ENCODE measurements at regions of chr7 and their contacts with region 1.

Region 1: GRCh38 chr7:107462740-107463444 is 7.0 kb upstream of the GPR22 start:
- DNase-seq: peak; percentile 58
- H3K4me3 ChIP-seq: no peak overlapping the region
- H3K27ac ChIP-seq: no peak overlapping the region
- H3K4me1 ChIP-seq: no peaks in the 10 kb centered on the region
- H3K27me3 ChIP-seq: no peaks in the 10 kb centered on the region
- CTCF ChIP-seq: peak; percentile 38 to 88 (median 72)
- POLR2A ChIP-seq: no peak

Region 2: GRCh38 chr7:107201795-107202450 is 261.0 kb before region 1 on chr7:
- intact Hi-C with region 1: loop called (anchors 10 kb)
- DNase-seq: peak; percentile 37
- H3K4me3 ChIP-seq: no peak overlapping the region
- H3K27ac ChIP-seq: no peak overlapping the region
- H3K4me1 ChIP-seq: no peaks in the 10 kb centered on the region
- H3K27me3 ChIP-seq: no peaks in the 10 kb centered on the region
- CTCF ChIP-seq: peak in 3 of 4 experiments; percentile 25 to 67 (median 52)
- POLR2A ChIP-seq: no peak

Region 3: DNA sequence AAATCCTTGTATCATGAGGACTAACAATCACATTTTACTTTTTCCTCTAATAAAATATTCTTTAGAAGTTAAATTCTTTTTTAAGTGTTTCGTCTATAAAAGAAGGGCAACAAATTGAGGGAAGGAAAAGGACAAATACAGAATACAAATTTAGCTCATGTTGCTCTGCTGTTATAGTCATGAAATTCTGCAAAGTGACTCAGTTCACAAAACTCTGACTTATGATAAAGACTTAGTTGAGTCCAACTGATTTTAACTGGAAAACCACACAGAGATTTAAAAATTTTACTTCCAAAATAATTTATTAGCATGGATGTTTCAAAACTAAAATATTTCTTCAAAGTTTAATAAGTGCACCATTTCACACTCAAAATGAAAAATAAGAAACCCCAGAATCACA is 68.1 kb before region 1 on chr7:
- intact Hi-C with region 1: no loop called
- DNase-seq: no peak
- H3K4me3 ChIP-seq: no peak overlapping the region
- H3K27ac ChIP-seq: no peak overlapping the region
- H3K4me1 ChIP-seq: no peaks in the 10 kb centered on the region
- H3K27me3 ChIP-seq: no peaks in the 10 kb centered on the region
- CTCF ChIP-seq: no peak
- POLR2A ChIP-seq: no peak

Region 4: DNA sequence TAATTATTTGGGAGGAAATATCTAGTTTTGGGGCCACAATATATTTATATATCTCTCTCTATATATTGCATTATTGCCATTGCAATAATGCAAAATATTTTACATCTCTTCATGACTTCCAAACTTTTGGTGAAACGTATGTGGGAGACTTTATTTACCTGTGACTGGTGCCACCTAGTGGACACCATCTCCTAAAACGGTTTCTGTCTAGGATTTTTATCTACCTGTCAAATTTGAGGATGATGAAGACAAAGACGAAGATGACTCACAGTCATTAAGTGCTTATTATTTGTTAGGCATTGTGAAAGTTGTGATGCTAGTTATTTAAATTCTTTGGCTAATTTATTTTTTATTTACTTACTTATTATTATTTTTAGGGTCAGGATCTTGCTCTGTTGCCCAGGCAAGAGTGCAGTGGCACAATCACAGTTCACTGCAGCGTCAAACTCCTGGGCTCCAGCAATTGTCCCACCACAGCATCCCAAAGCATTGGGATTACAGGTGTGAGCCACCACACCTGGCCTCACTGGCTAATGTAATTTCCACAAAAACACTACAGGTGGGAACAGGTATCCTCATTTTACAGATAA is 262.4 kb after region 1 on chr7:
- intact Hi-C with region 1: loop called (anchors 1 kb)
- DNase-seq: peak; percentile 53
- H3K4me3 ChIP-seq: no peak overlapping the region
- H3K27ac ChIP-seq: no peak overlapping the region
- H3K4me1 ChIP-seq: no peaks in the 10 kb centered on the region
- H3K27me3 ChIP-seq: no peaks in the 10 kb centered on the region
- CTCF ChIP-seq: peak; percentile 43 to 81 (median 78)
- POLR2A ChIP-seq: no peak

Region 5: GRCh38 chr7:108135446-108136190 is 672.7 kb after region 1 on chr7:
- intact Hi-C with region 1: loop called (anchors 5 kb)
- DNase-seq: no peak
- H3K4me3 ChIP-seq: no peak overlapping the region
- H3K27ac ChIP-seq: no peak overlapping the region
- H3K4me1 ChIP-seq: no peaks in the 10 kb centered on the region
- H3K27me3 ChIP-seq: no peaks in the 10 kb centered on the region
- CTCF ChIP-seq: no peak
- POLR2A ChIP-seq: no peak